CD4-positive, alpha-beta memory T cell (primary cell): ENCODE measurements at regions of chr11 and their contacts with region 1.

Region 1: DNA sequence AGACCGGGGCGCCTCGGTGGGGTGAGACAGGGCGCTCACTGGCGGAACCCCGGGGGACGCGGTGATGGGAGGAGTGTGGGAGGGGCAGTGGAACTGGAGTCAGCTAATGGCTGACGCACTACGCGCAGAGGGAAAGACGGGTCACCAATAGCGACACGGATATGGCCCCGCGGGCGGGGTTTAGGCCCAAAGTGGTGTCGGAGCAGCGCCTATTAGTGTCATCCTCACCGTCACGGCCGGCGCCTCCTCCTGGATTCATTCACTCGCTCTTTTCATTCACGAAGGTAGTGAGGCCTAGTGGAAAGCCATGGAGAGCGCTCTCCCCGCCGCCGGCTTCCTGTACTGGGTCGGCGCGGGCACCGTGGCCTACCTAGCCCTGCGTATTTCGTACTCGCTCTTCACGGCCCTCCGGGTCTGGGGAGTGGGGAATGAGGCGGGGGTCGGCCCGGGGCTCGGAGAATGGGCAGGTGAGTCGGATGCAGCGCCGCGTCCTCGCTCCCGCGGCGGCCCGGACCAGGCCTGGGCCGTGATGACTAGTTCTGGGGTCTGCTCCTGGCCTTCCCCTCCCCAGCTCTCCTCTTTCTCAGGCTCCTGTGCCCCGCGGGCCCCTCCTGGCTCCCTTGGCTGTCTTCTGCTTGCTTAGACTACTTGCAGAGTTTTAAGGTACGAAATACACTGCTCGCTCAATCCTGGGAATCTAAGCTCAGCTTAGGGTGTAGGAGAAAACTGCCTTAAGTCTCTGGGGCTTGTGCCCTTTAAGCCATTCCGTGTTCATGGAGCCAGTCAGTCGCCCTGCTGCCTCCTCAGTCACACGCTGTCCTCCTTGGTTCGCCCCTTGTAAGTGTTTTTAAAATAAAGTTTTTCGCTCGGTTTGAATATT is at the start of gene HSD17B12:
- DNase-seq: peak; percentile 98 to 100 (median 99)
- H3K4me3 ChIP-seq: peak within 1 kb of the TSS in 1 of 2 donors; percentile 65
- H3K4me3 Mint-ChIP-seq: peak within 1 kb of the TSS; percentile 88 to 96 (median 93)
- H3K27ac ChIP-seq: peak within 1 kb of the TSS; percentile 87
- H3K27ac Mint-ChIP-seq: peak within 1 kb of the TSS; percentile 90 to 99 (median 98)
- H3K4me1 ChIP-seq: peaks cover 12% of the 10 kb centered on the region
- H3K4me1 Mint-ChIP-seq: peaks cover 17 to 30% (median 22%) of the 10 kb centered on the region in 4 donors
- H3K27me3 ChIP-seq: no peaks in the 10 kb centered on the region
- H3K27me3 Mint-ChIP-seq: no peaks in the 10 kb centered on the region
- total RNA-seq, gene HSD17B12: 14.0 to 17.9 TPM

Region 2: GRCh38 chr11:43358801-43359421 is 321.9 kb before region 1 on chr11 and contains the start of gene TTC17:
- CTCF ChIA-PET with region 1: no interaction called
- POLR2A ChIA-PET with region 1: interaction called, 21 read pairs
- intact Hi-C with region 1: loop called (anchors 2 kb)
- DNase-seq: peak; percentile 89 to 95 (median 90)
- H3K4me3 ChIP-seq: peak within 1 kb of the TSS; percentile 51 to 89
- H3K4me3 Mint-ChIP-seq: peak within 1 kb of the TSS; percentile 94 to 100 (median 99)
- H3K27ac ChIP-seq: peak within 1 kb of the TSS; percentile 92
- H3K27ac Mint-ChIP-seq: peak within 1 kb of the TSS; percentile 96 to 99 (median 98)
- H3K4me1 ChIP-seq: peaks cover 32% of the 10 kb centered on the region
- H3K4me1 Mint-ChIP-seq: peaks cover 31 to 60% (median 47%) of the 10 kb centered on the region in 4 donors
- H3K27me3 ChIP-seq: no peaks in the 10 kb centered on the region
- H3K27me3 Mint-ChIP-seq: no peaks in the 10 kb centered on the region
- total RNA-seq, gene TTC17: 105 to 112 TPM

Region 3: GRCh38 chr11:43643898-43644620 is 36.7 kb before region 1 on chr11:
- CTCF ChIA-PET with region 1: interaction called, 3 read pairs
- POLR2A ChIA-PET with region 1: interaction called, 4 read pairs
- intact Hi-C with region 1: loop called (anchors 1 kb)
- DNase-seq: peak; percentile 84 to 87 (median 85)
- H3K4me3 ChIP-seq: peak overlapping the region; percentile 75 to 90
- H3K4me3 Mint-ChIP-seq: peak overlapping the region; percentile 88 to 97 (median 94)
- H3K27ac ChIP-seq: peak overlapping the region; percentile 71
- H3K27ac Mint-ChIP-seq: peak overlapping the region; percentile 82 to 95 (median 93)
- H3K4me1 ChIP-seq: peaks cover 17% of the 10 kb centered on the region
- H3K4me1 Mint-ChIP-seq: peaks cover 12 to 17% (median 15%) of the 10 kb centered on the region in 4 donors
- H3K27me3 ChIP-seq: peaks cover 9% of the 10 kb centered on the region
- H3K27me3 Mint-ChIP-seq: peaks cover 12 to 18% of the 10 kb centered on the region in 2 donors

Region 4: GRCh38 chr11:43868852-43869567 is 188.2 kb after region 1 on chr11:
- CTCF ChIA-PET with region 1: no interaction called
- POLR2A ChIA-PET with region 1: no interaction called
- intact Hi-C with region 1: loop called (anchors 5 kb)
- DNase-seq: peak; percentile 48 to 62 (median 54)
- H3K4me3 ChIP-seq: no peak overlapping the region
- H3K4me3 Mint-ChIP-seq: peak overlapping the region; percentile 44 to 79 (median 66)
- H3K27ac ChIP-seq: peak overlapping the region; percentile 40
- H3K27ac Mint-ChIP-seq: peak overlapping the region; percentile 70 to 92 (median 83)
- H3K4me1 ChIP-seq: peaks cover 17% of the 10 kb centered on the region
- H3K4me1 Mint-ChIP-seq: peaks cover 11 to 23% (median 17%) of the 10 kb centered on the region in 4 donors
- H3K27me3 ChIP-seq: peaks cover 6% of the 10 kb centered on the region
- H3K27me3 Mint-ChIP-seq: peaks cover 10 to 25% of the 10 kb centered on the region in 2 donors

Region 5: DNA sequence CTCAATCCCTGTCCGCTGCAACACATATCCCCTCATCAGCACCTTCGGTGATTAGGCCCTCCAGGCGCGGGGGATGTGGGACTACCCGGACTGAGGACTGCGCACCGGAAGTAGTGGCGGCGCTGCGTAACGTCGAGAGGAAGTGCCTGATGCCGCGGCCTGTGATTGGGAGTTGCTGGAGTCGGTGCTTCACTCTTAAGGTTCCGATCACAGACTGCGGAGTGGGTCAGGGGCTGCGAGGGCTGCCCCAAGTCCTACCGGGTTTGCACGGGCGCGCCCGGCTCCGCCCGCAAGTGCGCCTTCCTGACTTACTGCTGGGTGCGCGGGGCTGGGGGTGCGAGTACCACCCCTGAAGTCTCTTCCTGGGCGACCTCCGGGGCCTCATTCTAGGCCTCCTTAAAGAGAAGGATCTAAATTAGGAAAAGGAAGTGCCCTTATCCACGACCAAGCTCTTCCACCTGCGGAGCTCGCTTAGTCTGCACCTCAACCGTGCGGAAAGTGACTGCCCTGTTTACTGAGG is 199.9 kb after region 1 on chr11 and contains the start of gene ALKBH3:
- CTCF ChIA-PET with region 1: no interaction called
- POLR2A ChIA-PET with region 1: interaction called, 4 read pairs
- intact Hi-C with region 1: loop called (anchors 2 kb)
- DNase-seq: peak; percentile 87 to 93 (median 89)
- H3K4me3 ChIP-seq: peak within 1 kb of the TSS; percentile 86 to 92
- H3K4me3 Mint-ChIP-seq: peak within 1 kb of the TSS; percentile 88 to 98 (median 96)
- H3K27ac ChIP-seq: peak within 1 kb of the TSS; percentile 64
- H3K27ac Mint-ChIP-seq: peak within 1 kb of the TSS; percentile 75 to 96 (median 92)
- H3K4me1 ChIP-seq: peaks cover 19% of the 10 kb centered on the region
- H3K4me1 Mint-ChIP-seq: peaks cover 17 to 41% (median 27%) of the 10 kb centered on the region in 4 donors
- H3K27me3 ChIP-seq: peaks cover 8% of the 10 kb centered on the region
- H3K27me3 Mint-ChIP-seq: peaks cover 13 to 25% of the 10 kb centered on the region in 2 donors
- total RNA-seq, gene ALKBH3: 34.1 to 39.6 TPM

Region 6: GRCh38 chr11:43969543-43969942 is 288.8 kb after region 1 on chr11:
- CTCF ChIA-PET with region 1: no interaction called
- POLR2A ChIA-PET with region 1: no interaction called
- intact Hi-C with region 1: no loop called
- DNase-seq: no peak
- H3K4me3 ChIP-seq: no peak overlapping the region
- H3K4me3 Mint-ChIP-seq: no peak overlapping the region
- H3K27ac ChIP-seq: no peak overlapping the region
- H3K27ac Mint-ChIP-seq: no peak overlapping the region
- H3K4me1 ChIP-seq: no peaks in the 10 kb centered on the region
- H3K4me1 Mint-ChIP-seq: no peaks in the 10 kb centered on the region
- H3K27me3 ChIP-seq: no peaks in the 10 kb centered on the region
- H3K27me3 Mint-ChIP-seq: peaks cover 16 to 18% of the 10 kb centered on the region in 2 donors

Region 7: GRCh38 chr11:44065841-44066731 is 385.3 kb after region 1 on chr11 and contains the start of gene ACCS:
- CTCF ChIA-PET with region 1: no interaction called
- POLR2A ChIA-PET with region 1: interaction called, 3 read pairs
- intact Hi-C with region 1: loop called (anchors 1 kb)
- DNase-seq: peak; percentile 87 to 93 (median 89)
- H3K4me3 ChIP-seq: peak within 1 kb of the TSS; percentile 79 to 86
- H3K4me3 Mint-ChIP-seq: peak within 1 kb of the TSS; percentile 89 to 98 (median 94)
- H3K27ac ChIP-seq: peak within 1 kb of the TSS; percentile 63
- H3K27ac Mint-ChIP-seq: peak within 1 kb of the TSS; percentile 91 to 95 (median 94)
- H3K4me1 ChIP-seq: peaks cover 17% of the 10 kb centered on the region
- H3K4me1 Mint-ChIP-seq: peaks cover 5 to 54% (median 31%) of the 10 kb centered on the region in 4 donors
- H3K27me3 ChIP-seq: no peaks in the 10 kb centered on the region
- H3K27me3 Mint-ChIP-seq: no peaks in the 10 kb centered on the region
- total RNA-seq, gene ACCS: 74.9 to 78.9 TPM